ENCODE measurements at regions of chr11 and their contacts with region 1.

Region 1: DNA sequence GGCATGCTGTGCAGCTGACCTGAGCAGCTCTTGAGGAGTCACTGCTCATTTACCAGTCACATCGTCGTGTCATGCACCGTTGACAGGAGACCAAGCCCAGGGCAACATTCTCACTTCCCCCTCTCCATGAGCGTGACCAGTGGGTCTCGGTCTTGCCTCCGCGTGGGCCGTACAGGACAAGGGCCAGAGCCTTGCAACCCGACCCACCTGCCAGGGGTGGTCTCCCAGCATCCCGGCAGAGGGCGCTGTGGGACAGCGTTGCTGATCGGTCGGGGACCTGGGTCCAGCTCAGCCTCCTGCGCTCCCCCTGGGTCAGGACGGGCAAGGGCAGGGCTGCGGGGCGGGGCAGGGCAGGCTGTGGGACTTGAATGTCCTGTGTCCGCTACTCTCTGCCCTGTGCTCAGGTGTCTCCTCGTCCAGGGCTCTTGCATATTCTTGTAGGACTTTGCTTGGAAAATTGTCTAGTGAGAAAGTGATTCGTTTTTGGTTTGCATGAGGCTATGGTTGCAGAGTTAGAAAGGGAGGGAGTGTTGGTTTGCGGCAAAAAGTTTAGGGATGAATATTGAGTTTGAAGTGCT is 16.2 kb downstream of the EIF4G2 start:
- DNase-seq: peak; percentile 98
- H3K4me3 ChIP-seq: peak overlapping the region in 2 of 8 donors; percentile 16 to 49
- H3K27ac ChIP-seq: no peak overlapping the region
- H3K4me1 ChIP-seq: peaks cover 6 to 42% (median 27%) of the 10 kb centered on the region in 6 donors
- H3K27me3 ChIP-seq: no peaks in the 10 kb centered on the region
- CTCF ChIP-seq: peak; percentile 85 to 94 (median 92)
- POLR2A ChIP-seq: no peak

Region 2: GRCh38 chr11:10225553-10225952 is 566.9 kb before region 1 on chr11:
- intact Hi-C with region 1: no loop called
- DNase-seq: no peak
- H3K4me3 ChIP-seq: no peak overlapping the region
- H3K27ac ChIP-seq: no peak overlapping the region
- H3K4me1 ChIP-seq: peaks cover 0 to 22% (median 0%) of the 10 kb centered on the region in 6 donors
- H3K27me3 ChIP-seq: no peaks in the 10 kb centered on the region
- CTCF ChIP-seq: no peak
- POLR2A ChIP-seq: no peak

Region 3: GRCh38 chr11:11022125-11022730 is 229.7 kb after region 1 on chr11:
- intact Hi-C with region 1: loop called (anchors 5 kb)
- DNase-seq: no peak
- H3K4me3 ChIP-seq: no peak overlapping the region
- H3K27ac ChIP-seq: no peak overlapping the region
- H3K4me1 ChIP-seq: peaks cover 0 to 7% (median 0%) of the 10 kb centered on the region in 6 donors
- H3K27me3 ChIP-seq: no peaks in the 10 kb centered on the region
- CTCF ChIP-seq: peak in 10 of 11 experiments; percentile 15 to 71 (median 54)
- POLR2A ChIP-seq: no peak